Activated T-helper 1 cell treated with anti-CD3 and anti-CD28 coated beads, Interleukin-12 subunit alpha, Interleukin-12 subunit beta, Interleukin-2, Interleukin-4 antibody, amounts not matched to agents 30 ng/mL and 10 ng/mL and 1 ng/mL, durations not matched to agents 14 hours and 24 hours and 36 hours (primary cell): ENCODE measurements at regions of chr7 and their contacts with region 1.

Region 1: GRCh38 chr7:48660306-48660870 is 264.0 kb upstream of the CDC14C start:
- DNase-seq: no peak
- H3K4me3 Mint-ChIP-seq: no peak overlapping the region
- H3K27ac Mint-ChIP-seq: no peak overlapping the region
- H3K4me1 Mint-ChIP-seq: no peaks in the 10 kb centered on the region
- H3K27me3 Mint-ChIP-seq: peaks cover 4% of the 10 kb centered on the region

Region 2: GRCh38 chr7:49852619-49853462 is 1192.5 kb after region 1 on chr7:
- intact Hi-C with region 1: loop called (anchors 10 kb)
- DNase-seq: no peak
- H3K4me3 Mint-ChIP-seq: no peak overlapping the region
- H3K27ac Mint-ChIP-seq: no peak overlapping the region
- H3K4me1 Mint-ChIP-seq: no peaks in the 10 kb centered on the region
- H3K27me3 Mint-ChIP-seq: no peaks in the 10 kb centered on the region